HepG2 (cell line): ENCODE measurements at regions of chr16 and their contacts with region 1.

Region 1: GRCh38 chr16:72927199-72928089 is 120.5 kb downstream of the ZFHX3 start:
- DNase-seq: peak; percentile 95
- ATAC-seq: peak; percentile 17; the same call in 2 of the 3 replicates
- H3K4me3 ChIP-seq: peak overlapping the region in 1 of 3 experiments; percentile 6; a peak in 1 of 6 replicates
- H3K27ac ChIP-seq: peak overlapping the region; percentile 96
- H3K4me1 ChIP-seq: peaks cover 99% of the 10 kb centered on the region
- H3K27me3 ChIP-seq: no peaks in the 10 kb centered on the region
- CTCF ChIP-seq: peak; percentile 40
- EP300 ChIP-seq: peak; percentile 78 to 97
- POLR2A ChIP-seq: no peak
- RAD21 ChIP-seq: peak; percentile 33; the same call in 1 of the 2 replicates

Region 2: GRCh38 chr16:71808593-71809459 is 1118.6 kb before region 1 on chr16 and contains the start of gene AP1G1:
- CTCF ChIA-PET with region 1: no interaction called
- POLR2A ChIA-PET with region 1: no interaction called
- in situ Hi-C with region 1: no loop called
- intact Hi-C with region 1: no loop called
- DNase-seq: peak; percentile 98
- ATAC-seq: peak; percentile 94
- H3K4me3 ChIP-seq: peak within 1 kb of the TSS; percentile 96 to 99 (median 98)
- H3K27ac ChIP-seq: peak within 1 kb of the TSS; percentile 98
- H3K4me1 ChIP-seq: peaks cover 48% of the 10 kb centered on the region
- H3K27me3 ChIP-seq: peaks cover 0 to 6% of the 10 kb centered on the region in 2 experiments; a peak in 1 of 5 replicates
- CTCF ChIP-seq: peak; percentile 10; the same call in 1 of the 2 replicates
- EP300 ChIP-seq: peak in 1 of 2 experiments; percentile 31; a peak in 3 of 4 replicates
- POLR2A ChIP-seq: peak; percentile 87 to 88
- RAD21 ChIP-seq: peak; percentile 54; the same call in 1 of the 2 replicates
- total RNA-seq, gene AP1G1: 66.2 and 87.1 TPM in 2 replicates

Region 3: DNA sequence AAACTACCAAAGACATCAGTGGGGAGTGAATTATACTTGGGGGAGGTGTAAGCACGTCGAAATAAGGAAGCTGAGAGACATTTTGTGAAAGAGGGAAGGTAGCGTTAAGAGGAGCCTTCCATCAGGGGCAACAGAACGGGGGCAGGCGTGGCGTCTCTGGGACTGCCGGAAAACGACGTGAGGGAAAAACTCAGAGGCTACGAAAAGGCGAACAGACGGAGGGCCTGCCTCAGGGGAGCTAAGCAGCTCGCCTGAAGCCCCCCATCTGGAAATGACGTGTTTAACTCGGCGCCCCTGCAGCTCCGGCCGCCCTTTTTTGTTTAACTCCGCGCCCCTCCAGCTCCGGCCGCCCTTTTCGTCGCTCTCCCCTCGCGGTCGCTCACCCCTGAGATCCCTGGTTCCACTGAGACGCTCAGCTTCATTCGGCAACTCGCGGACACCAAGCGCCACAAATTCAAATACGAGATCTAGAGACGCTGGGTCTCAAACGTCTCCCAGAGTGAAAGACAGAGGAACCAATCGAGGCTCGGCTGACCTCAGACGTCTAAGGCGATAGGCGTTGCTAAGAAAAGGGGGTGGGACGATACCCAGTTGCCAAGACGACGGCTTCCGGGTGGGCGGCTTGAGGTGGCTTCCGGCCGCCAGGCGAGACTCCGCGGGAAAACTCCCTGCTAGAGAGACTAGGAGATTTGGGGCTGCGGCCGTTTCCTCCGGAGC is 262.8 kb before region 1 on chr16:
- CTCF ChIA-PET with region 1: no interaction called
- POLR2A ChIA-PET with region 1: no interaction called
- in situ Hi-C with region 1: no loop called
- intact Hi-C with region 1: loop called (anchors 10 kb)
- DNase-seq: peak; percentile 99
- ATAC-seq: peak; percentile 100
- H3K4me3 ChIP-seq: peak overlapping the region; percentile 77 to 93 (median 88)
- H3K27ac ChIP-seq: peak overlapping the region; percentile 75
- H3K4me1 ChIP-seq: peaks cover 23% of the 10 kb centered on the region
- H3K27me3 ChIP-seq: no peaks in the 10 kb centered on the region; a peak in 1 of 5 replicates
- CTCF ChIP-seq: no peak; the same call in 1 of the 2 replicates
- EP300 ChIP-seq: no peak
- POLR2A ChIP-seq: peak; percentile 57 to 91
- RAD21 ChIP-seq: no peak

Region 4: GRCh38 chr16:72913377-72914096 is 13.9 kb before region 1 on chr16:
- CTCF ChIA-PET with region 1: no interaction called
- POLR2A ChIA-PET with region 1: interaction called, 16 read pairs
- in situ Hi-C with region 1: no loop called
- intact Hi-C with region 1: no loop called
- DNase-seq: no peak
- ATAC-seq: no peak
- H3K4me3 ChIP-seq: no peak overlapping the region
- H3K27ac ChIP-seq: peak overlapping the region; percentile 57
- H3K4me1 ChIP-seq: peaks cover 34% of the 10 kb centered on the region
- H3K27me3 ChIP-seq: no peaks in the 10 kb centered on the region
- CTCF ChIP-seq: no peak
- EP300 ChIP-seq: no peak
- POLR2A ChIP-seq: no peak
- RAD21 ChIP-seq: no peak

Region 5: DNA sequence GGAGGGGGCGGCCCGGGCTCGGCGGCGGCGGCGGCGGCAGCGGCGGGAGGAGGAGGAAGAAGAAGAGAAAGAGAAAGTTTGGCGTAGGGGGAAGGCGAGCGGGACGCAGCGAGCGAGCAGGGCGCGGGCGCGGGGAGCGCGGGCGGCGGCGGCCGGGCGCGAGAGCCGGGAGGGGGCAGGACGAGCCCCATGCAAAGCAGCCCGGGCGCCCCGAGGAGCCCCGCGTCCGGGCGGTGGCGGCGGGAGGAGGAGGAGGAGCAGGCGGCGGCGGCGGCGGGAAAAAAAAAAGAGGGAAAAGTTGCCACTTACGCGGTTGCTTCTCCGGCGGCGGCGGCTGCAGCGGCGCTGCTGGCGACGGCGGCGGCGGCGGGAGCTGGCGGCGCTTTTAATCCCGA is 130.8 kb after region 1 on chr16:
- CTCF ChIA-PET with region 1: no interaction called
- POLR2A ChIA-PET with region 1: interaction called, 16 read pairs
- in situ Hi-C with region 1: no loop called
- intact Hi-C with region 1: loop called (anchors 2 kb)
- DNase-seq: no peak
- ATAC-seq: no peak
- H3K4me3 ChIP-seq: peak overlapping the region; percentile 75 to 78 (median 77); a peak in 4 of 6 replicates
- H3K27ac ChIP-seq: peak overlapping the region; percentile 57
- H3K4me1 ChIP-seq: peaks cover 53% of the 10 kb centered on the region
- H3K27me3 ChIP-seq: no peaks in the 10 kb centered on the region
- CTCF ChIP-seq: no peak
- EP300 ChIP-seq: no peak
- POLR2A ChIP-seq: no peak
- RAD21 ChIP-seq: peak; percentile 26; the same call in 1 of the 2 replicates

Region 6: GRCh38 chr16:73405851-73406250 is 478.4 kb after region 1 on chr16:
- CTCF ChIA-PET with region 1: no interaction called
- POLR2A ChIA-PET with region 1: no interaction called
- in situ Hi-C with region 1: no loop called
- intact Hi-C with region 1: no loop called
- DNase-seq: no peak
- ATAC-seq: no peak
- H3K4me3 ChIP-seq: no peak overlapping the region
- H3K27ac ChIP-seq: no peak overlapping the region
- H3K4me1 ChIP-seq: no peaks in the 10 kb centered on the region
- H3K27me3 ChIP-seq: peaks cover 0 to 22% of the 10 kb centered on the region in 2 experiments; a peak in 2 of 5 replicates
- CTCF ChIP-seq: no peak
- EP300 ChIP-seq: no peak
- POLR2A ChIP-seq: no peak
- RAD21 ChIP-seq: no peak